ENCODE measurements at regions of chr16 and their contacts with region 1.

Region 1: DNA sequence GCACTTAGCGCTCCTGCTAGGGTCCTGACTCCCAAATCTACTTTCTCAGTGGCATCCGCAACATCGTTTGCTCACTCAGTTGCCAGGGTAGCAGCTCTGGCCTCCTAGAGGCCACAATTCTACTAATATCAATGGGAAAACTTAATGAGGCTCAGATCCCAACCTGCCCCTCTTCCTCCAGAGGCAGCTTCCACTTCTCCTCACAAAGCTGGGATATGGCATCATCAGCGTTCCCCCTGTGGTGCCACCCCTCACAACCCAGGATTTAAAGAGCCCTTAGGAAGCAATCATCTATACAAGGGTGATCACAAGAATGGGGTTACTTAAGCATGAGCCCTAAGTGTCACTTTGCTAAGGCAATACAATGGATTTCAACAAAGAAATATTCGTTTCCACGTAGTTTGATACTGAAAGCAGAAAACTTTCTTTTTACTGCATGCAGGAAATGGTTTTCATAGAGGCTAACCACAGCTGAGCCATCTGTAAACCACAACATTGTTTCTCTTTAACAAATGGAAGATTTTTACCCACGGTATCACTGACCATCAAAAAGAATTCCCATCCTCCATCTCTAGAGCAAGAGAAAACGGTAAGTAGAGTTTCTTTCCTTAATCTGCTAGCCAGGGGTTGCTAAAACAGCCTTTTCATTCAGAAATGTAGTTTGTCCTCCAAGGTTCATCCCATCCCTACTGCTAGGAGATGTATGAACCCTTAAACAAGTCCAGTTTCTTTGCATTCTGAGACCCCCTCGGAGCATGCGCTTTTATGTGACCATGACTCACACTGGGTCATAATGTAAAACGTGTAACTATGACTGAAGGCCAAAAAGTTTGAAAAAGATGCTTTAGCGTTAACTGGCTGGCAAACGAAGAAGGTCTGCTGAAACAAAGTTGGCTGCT is 68.3 kb upstream of the BCAR1 start:
- DNase-seq: peak; percentile 11
- H3K4me3 Mint-ChIP-seq: no peak overlapping the region
- H3K27ac Mint-ChIP-seq: no peak overlapping the region
- H3K4me1 Mint-ChIP-seq: peaks cover 28% of the 10 kb centered on the region
- H3K27me3 Mint-ChIP-seq: peaks cover 33% of the 10 kb centered on the region

Region 2: DNA sequence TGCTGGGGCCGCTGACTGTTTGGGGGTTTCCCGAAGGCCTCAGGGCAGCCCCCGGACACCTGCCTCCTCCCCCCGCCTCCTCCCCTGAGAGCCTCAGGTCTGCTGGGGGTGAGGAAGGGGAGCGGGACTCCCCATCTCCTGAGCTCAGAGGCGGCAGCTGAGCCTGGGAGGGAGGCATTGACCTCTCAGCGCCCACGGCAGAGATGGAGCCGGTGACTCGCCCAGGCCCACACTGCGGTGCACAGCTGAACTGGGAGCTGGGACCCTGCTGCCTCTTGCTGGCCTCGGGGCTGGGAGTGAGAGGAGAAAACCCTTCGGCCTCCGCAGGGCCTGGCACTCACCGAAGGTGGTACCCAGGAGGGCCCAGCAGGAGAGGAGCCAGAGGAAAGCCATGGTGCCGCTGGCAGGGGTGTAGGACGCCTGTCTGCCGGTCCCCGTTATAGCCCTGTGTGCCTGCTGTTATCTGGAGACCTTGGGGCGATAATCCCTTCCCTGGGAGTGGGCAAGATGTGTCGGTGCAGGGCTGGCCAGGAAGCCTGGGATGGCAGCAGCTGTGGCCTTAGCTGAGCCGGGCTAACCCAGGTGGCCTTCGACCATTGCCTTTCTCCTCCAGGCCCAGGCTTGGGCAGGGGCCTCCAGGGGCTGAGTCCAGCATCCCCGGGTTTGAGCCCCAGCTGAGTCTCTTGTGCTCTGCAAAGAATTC is 112.9 kb before region 1 on chr16 and contains the start of gene CTRB2:
- intact Hi-C with region 1: no loop called
- DNase-seq: no peak
- H3K4me3 Mint-ChIP-seq: no peak within 1 kb of the TSS
- H3K27ac Mint-ChIP-seq: no peak within 1 kb of the TSS
- H3K4me1 Mint-ChIP-seq: no peaks in the 10 kb centered on the region
- H3K27me3 Mint-ChIP-seq: peaks cover 2% of the 10 kb centered on the region
- total RNA-seq, gene CTRB2: not detected in 2 replicates

Region 3: DNA sequence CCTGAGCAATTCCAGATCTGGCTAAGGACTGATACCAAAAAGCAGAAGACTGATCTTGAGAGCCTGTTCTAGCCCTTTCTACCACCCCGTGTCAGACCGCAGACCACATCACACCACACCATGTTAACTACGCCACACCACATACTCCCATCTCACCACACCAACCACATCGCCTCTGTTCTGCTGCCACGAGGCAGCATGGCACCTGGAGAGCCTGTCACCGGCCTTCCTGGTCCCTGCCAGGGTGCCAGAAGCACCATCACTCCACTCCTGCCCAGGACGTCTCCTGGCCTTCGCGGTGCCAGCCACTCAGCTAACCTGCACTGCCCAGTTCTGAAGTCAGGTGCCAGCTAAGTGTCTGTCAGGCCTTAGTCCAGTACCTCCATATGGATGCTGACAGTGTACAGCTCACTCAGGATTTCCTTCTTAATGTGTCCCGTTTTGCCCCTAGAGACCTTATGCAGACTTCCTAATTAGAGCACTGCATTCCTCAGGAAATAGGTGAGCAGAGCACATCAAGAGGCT is 31.1 kb before region 1 on chr16:
- intact Hi-C with region 1: loop called (anchors 2 kb)
- DNase-seq: peak; percentile 46
- H3K4me3 Mint-ChIP-seq: peak overlapping the region; percentile 0
- H3K27ac Mint-ChIP-seq: peak overlapping the region; percentile 59
- H3K4me1 Mint-ChIP-seq: peaks cover 11% of the 10 kb centered on the region
- H3K27me3 Mint-ChIP-seq: peaks cover 18% of the 10 kb centered on the region

Measured in activated T-helper 1 cell treated with anti-CD3 and anti-CD28 coated beads, Interleukin-12 subunit alpha, Interleukin-12 subunit beta, Interleukin-2, Interleukin-4 antibody, amounts not matched to agents 30 ng/mL and 10 ng/mL and 1 ng/mL, durations not matched to agents 14 hours and 24 hours and 36 hours (primary cell).